ENCODE measurements at regions of chr4 and their contacts with region 1.

Region 1: DNA sequence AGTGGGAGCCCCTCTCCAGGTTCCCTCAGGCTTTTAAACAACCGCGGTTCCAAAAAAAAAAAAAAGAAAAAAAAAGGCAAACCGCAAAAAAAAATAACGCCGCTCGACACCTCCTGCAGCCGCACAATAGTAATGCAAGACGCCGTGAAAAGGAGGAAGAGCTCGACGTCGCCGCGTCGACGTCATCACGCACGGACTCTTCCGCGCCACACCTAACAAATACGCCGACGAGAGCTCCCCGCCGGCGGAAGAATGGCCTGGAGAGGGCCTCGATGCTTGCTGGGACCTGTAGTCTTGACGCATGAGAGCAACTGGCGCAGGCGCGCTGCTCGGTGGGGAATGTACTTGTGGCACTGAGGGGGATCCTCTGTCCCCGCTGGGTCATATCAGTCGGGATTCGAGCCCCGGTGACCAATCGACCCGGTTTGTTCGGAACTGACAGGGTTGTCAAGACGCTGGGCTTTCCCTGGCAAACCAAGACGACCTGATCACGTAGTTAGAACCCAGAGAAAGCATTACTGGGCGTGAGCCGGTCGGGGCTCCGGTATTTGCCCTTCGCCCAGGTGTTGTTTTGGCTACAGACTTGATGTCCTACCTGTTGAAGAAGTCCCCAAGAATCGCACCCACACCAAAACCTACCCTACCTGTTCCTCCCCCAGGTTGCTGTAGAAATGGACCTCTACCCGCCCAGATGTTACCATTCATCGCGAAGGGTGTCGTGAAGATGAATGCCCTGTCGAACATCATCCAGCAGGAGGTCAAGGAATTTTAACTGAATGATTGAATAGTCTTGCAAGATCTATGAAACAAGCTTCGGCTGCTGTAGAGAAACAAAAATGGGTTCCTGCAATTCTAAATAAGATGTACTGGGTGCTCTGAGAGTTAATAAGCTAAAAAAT is at the start of gene CBR4:
- DNase-seq: peak; percentile 93
- H3K4me3 ChIP-seq: peak within 1 kb of the TSS; percentile 82
- H3K27me3 ChIP-seq: no peaks in the 10 kb centered on the region
- CTCF ChIP-seq: peak; percentile 44
- polyA plus RNA-seq, gene CBR4: 1.7 and 3.1 TPM in 2 replicates

Region 2: GRCh38 chr4:169109035-169109675 is 98.8 kb after region 1 on chr4:
- CTCF ChIA-PET with region 1: no interaction called
- POLR2A ChIA-PET with region 1: interaction called, 15 read pairs
- DNase-seq: no peak
- H3K4me3 ChIP-seq: no peak overlapping the region
- H3K27me3 ChIP-seq: no peaks in the 10 kb centered on the region
- CTCF ChIP-seq: no peak

Measured in BJ (cell line).